CD8-positive, alpha-beta T cell (primary cell): ENCODE measurements at regions of chr12 and their contacts with region 1.

Region 1: DNA sequence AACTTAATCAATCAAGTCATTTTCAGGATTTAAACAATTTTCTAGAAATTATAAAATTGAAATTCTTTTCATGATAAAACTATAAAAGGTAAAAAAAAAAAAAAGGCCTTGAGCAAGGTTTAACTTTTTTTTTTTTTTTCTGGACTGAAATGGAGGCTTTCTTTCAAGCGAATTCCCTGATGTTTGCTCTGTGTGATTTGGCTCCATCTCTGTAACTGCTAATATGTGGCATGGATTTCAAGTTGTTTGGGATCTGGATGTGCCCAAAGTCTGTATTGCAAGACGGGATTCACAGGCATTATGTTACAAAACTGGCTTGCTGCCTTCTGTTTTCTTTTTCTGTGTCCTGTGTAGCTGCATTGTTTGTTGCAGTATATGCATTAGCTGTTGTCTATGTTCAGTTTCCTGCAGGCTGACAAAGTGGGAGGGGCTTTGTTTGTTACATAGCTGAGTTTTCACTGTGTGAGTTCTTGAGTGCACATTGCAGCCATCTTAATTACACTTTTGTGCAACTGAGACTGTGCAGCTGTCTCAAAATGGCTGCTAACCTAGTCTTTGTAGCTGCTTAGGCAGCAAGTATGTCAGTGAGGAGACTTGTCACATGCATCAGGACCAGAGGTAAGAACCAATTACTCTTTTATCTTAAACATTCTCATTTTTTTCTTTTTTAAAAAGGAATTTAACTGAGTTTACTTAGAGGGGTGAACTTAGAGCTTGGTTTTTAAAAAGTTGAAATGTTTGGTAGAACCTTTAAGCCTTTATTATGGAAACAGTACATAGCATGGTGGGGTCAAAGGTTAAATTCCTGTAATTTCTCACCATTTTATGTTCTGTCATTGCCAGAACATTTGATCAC is 19.5 kb downstream of the ATF7IP start:
- DNase-seq: peak; percentile 23 to 92 (median 57)
- ATAC-seq: peak; percentile 90
- H3K4me3 ChIP-seq: peak overlapping the region; percentile 1 to 48
- H3K4me3 Mint-ChIP-seq: peak overlapping the region; percentile 60
- H3K27ac ChIP-seq: peak overlapping the region; percentile 56 to 59
- H3K27ac Mint-ChIP-seq: peak overlapping the region; percentile 80
- H3K4me1 ChIP-seq: peaks cover 54% of the 10 kb centered on the region
- H3K4me1 Mint-ChIP-seq: peaks cover 69% of the 10 kb centered on the region
- H3K27me3 ChIP-seq: no peaks in the 10 kb centered on the region
- H3K27me3 Mint-ChIP-seq: no peaks in the 10 kb centered on the region
- CTCF ChIP-seq: no peak

Region 2: DNA sequence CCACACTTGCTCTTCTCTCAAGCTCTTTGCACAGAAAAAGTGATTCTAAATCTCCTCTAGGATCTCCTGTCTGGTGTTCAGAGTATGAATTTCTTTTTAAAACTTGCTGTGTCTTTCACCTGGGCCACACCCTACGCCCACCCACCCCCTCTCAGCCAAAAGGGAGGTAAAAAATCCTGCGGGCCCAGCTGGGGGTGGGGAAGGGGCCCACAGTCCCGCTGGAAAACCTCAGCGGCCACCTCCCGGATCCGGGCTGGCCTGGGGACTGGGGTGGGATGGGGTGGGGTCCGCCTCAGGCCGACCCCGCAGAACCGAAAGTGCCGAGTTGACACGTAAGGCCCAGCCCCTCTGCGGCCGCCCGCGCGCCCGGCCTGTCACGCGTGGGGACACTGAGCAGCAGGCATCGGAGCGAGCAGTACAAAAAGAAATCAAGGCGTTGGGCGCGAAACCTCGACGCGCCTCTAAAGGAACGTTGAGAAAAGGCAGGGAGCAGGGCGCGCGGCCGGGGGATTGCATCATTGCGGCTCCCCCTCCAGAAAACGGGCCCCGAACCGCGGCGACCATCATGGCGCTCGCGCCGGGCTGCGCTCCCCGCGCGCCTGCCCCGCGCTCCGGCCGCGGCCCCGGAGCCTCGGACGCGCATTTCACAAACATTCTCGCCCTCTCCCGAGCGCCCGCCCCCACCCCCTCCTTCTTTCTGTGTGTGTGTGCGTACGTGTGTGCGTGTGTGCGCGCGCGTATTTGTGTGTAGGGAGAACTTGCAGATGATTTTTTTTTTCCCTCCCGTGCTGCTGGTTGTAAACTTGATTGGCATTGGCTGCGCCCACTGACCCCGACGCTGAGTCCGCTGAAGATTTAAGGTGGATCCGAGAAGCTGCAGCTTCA is 1660.1 kb before region 1 on chr12:
- CTCF ChIA-PET with region 1: no interaction called
- POLR2A ChIA-PET with region 1: no interaction called
- intact Hi-C with region 1: loop called in 1 of 2 experiments (anchors 5 kb)
- DNase-seq: peak in 8 of 9 experiments; percentile 82 to 98 (median 86)
- ATAC-seq: peak; percentile 57
- H3K4me3 ChIP-seq: peak overlapping the region; percentile 90 to 92
- H3K4me3 Mint-ChIP-seq: peak overlapping the region; percentile 82
- H3K27ac ChIP-seq: peak overlapping the region; percentile 93 to 97
- H3K27ac Mint-ChIP-seq: peak overlapping the region; percentile 99
- H3K4me1 ChIP-seq: peaks cover 51% of the 10 kb centered on the region
- H3K4me1 Mint-ChIP-seq: peaks cover 52% of the 10 kb centered on the region
- H3K27me3 ChIP-seq: no peaks in the 10 kb centered on the region
- H3K27me3 Mint-ChIP-seq: no peaks in the 10 kb centered on the region
- CTCF ChIP-seq: no peak

Region 3: GRCh38 chr12:14373217-14373616 is 11.8 kb before region 1 on chr12:
- CTCF ChIA-PET with region 1: interaction called, 4 read pairs
- POLR2A ChIA-PET with region 1: interaction called, 19 read pairs
- intact Hi-C with region 1: loop called (anchors 1 to 2 kb)
- DNase-seq: no peak
- ATAC-seq: peak; percentile 47
- H3K4me3 ChIP-seq: no peak overlapping the region
- H3K4me3 Mint-ChIP-seq: peak overlapping the region; percentile 53
- H3K27ac ChIP-seq: peak overlapping the region in 1 of 2 experiments; percentile 11
- H3K27ac Mint-ChIP-seq: peak overlapping the region; percentile 90
- H3K4me1 ChIP-seq: peaks cover 45% of the 10 kb centered on the region
- H3K4me1 Mint-ChIP-seq: peaks cover 64% of the 10 kb centered on the region
- H3K27me3 ChIP-seq: no peaks in the 10 kb centered on the region
- H3K27me3 Mint-ChIP-seq: no peaks in the 10 kb centered on the region
- CTCF ChIP-seq: no peak

Region 4: GRCh38 chr12:14403711-14404196 is 18.7 kb after region 1 on chr12:
- CTCF ChIA-PET with region 1: interaction called, 4 read pairs
- POLR2A ChIA-PET with region 1: interaction called, 12 read pairs
- intact Hi-C with region 1: loop called in 1 of 2 experiments (anchors 2 kb)
- DNase-seq: peak in 5 of 9 experiments; percentile 19 to 87 (median 29)
- ATAC-seq: peak; percentile 50
- H3K4me3 ChIP-seq: peak overlapping the region in 1 of 2 experiments; percentile 0
- H3K4me3 Mint-ChIP-seq: peak overlapping the region; percentile 57
- H3K27ac ChIP-seq: peak overlapping the region; percentile 5 to 75
- H3K27ac Mint-ChIP-seq: peak overlapping the region; percentile 81
- H3K4me1 ChIP-seq: peaks cover 75% of the 10 kb centered on the region
- H3K4me1 Mint-ChIP-seq: peaks cover 71% of the 10 kb centered on the region
- H3K27me3 ChIP-seq: no peaks in the 10 kb centered on the region
- H3K27me3 Mint-ChIP-seq: no peaks in the 10 kb centered on the region
- CTCF ChIP-seq: no peak